Mammary epithelial cell (primary cell): ENCODE measurements at regions of chr12 and their contacts with region 1.

Region 1: DNA sequence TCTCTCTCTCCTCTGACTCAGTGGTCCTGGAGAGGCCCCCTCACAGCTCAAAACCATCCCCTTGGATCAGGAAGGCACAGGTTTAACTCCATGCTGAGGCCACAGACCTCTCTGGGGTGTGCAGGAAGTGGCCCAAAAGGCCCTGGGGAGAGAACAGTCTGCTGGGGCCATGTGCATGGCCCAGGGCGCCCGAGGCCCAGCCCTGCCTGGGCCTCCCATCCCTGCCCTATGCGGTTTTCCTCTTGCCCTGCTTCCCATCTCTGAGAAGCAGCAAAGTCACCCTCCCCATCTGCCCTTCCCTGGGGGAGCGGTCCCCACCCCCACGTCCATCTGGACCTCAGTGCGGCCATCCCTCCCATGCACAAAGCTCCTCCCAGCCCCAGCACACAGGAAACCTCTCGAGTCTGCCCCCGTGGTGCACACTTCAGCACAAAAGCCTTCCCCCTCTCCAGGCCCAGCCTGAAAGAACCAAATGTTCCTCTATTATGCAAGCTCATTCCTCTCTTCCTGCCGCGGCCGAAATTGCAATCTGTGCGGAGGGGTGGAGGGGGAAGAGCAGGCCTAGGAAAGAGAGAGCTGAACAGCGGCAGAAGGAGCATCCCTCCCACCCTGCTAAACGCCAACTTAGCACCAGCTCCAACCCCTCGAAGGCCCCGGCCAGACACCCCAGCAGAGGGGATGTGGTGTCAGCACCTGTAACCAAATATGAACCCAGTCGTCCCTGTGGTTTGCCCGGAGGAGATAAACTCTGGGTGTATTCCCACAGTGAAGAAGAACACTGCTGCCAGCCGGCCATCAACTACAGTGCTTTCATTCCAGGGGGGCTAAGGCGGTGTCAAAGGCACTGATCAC is 108.5 kb downstream of the SCARB1 start:
- DNase-seq: peak; percentile 72
- H3K4me3 ChIP-seq: no peak overlapping the region
- H3K27ac ChIP-seq: no peak overlapping the region
- H3K4me1 ChIP-seq: peaks cover 15% of the 10 kb centered on the region
- H3K27me3 ChIP-seq: no peaks in the 10 kb centered on the region
- CTCF ChIP-seq: no peak

Region 2: GRCh38 chr12:124273630-124274029 is 481.5 kb before region 1 on chr12:
- CTCF ChIA-PET with region 1: no interaction called
- dilution Hi-C with region 1: loop called (anchors 10 kb)
- in situ Hi-C with region 1: no loop called
- intact Hi-C with region 1: no loop called
- DNase-seq: peak; percentile 77
- H3K4me3 ChIP-seq: no peak overlapping the region
- H3K27ac ChIP-seq: peak overlapping the region; percentile 25
- H3K4me1 ChIP-seq: peaks cover 8% of the 10 kb centered on the region
- H3K27me3 ChIP-seq: no peaks in the 10 kb centered on the region
- CTCF ChIP-seq: peak; percentile 57 to 72

Region 3: GRCh38 chr12:124609041-124609995 is 145.9 kb before region 1 on chr12:
- CTCF ChIA-PET with region 1: no interaction called
- dilution Hi-C with region 1: loop called (anchors 10 kb)
- in situ Hi-C with region 1: no loop called
- intact Hi-C with region 1: no loop called
- DNase-seq: peak; percentile 82
- H3K4me3 ChIP-seq: no peak overlapping the region
- H3K27ac ChIP-seq: peak overlapping the region; percentile 12
- H3K4me1 ChIP-seq: peaks cover 22% of the 10 kb centered on the region
- H3K27me3 ChIP-seq: no peaks in the 10 kb centered on the region
- CTCF ChIP-seq: no peak

Region 4: DNA sequence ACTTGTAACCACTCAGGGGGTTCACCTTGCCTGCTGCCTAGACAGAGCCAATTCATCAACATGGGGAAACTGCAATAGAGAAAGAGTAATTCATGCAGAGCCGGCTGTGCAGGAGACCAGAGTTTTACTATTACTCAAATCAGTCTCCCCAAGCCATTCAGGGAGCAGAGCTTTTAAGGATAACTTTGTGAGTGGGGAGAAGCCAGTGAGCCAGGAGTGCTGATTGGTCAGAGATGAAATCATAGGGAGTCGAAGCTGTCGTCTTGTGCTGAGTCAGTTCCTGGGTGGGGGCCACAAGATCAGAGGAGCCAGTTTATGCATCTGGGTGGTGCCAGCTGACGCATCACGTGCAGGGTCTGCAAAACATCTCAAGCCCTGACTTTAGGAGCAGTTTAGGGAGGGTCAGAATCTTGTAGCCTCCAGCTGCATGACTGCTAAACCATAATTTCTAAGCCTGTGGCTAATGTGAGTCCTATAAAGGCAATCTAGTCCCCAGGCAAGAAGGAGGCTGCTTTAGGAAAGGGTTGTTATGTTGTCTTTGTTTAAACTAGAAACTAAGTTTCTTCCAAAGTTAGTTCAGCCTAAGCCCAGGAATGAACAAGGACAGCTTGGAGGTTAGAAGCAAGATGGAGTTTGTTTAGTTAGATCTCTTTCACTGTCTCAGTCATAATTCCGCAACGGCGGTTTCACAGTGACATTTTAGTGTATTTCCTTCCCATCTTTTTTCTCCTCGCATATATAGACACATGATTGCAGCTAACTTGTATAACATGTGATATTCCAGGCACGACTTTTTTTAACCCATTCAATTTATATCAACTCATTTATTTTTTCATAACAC is 118.8 kb before region 1 on chr12:
- CTCF ChIA-PET with region 1: no interaction called
- dilution Hi-C with region 1: loop called (anchors 10 kb)
- in situ Hi-C with region 1: no loop called
- intact Hi-C with region 1: no loop called
- DNase-seq: peak; percentile 96
- H3K4me3 ChIP-seq: no peak overlapping the region
- H3K27ac ChIP-seq: peak overlapping the region; percentile 71
- H3K4me1 ChIP-seq: peaks cover 64% of the 10 kb centered on the region
- H3K27me3 ChIP-seq: no peaks in the 10 kb centered on the region
- CTCF ChIP-seq: no peak